ENCODE measurements at regions of chr12 and their contacts with region 1.

Region 1: GRCh38 chr12:108664338-108665258 is 30.9 kb upstream of the SELPLG start:
- DNase-seq: peak; percentile 92
- ATAC-seq: peak; percentile 100
- H3K4me3 Mint-ChIP-seq: peak overlapping the region; percentile 31
- H3K27ac Mint-ChIP-seq: peak overlapping the region; percentile 79
- H3K4me1 Mint-ChIP-seq: peaks cover 19% of the 10 kb centered on the region
- H3K27me3 Mint-ChIP-seq: no peaks in the 10 kb centered on the region
- CTCF ChIP-seq: peak; percentile 96

Region 2: GRCh38 chr12:108457006-108457733 is 207.4 kb before region 1 on chr12:
- CTCF ChIA-PET with region 1: no interaction called
- POLR2A ChIA-PET with region 1: no interaction called
- intact Hi-C with region 1: no loop called
- DNase-seq: peak; percentile 25
- ATAC-seq: peak; percentile 75
- H3K4me3 Mint-ChIP-seq: no peak overlapping the region
- H3K27ac Mint-ChIP-seq: no peak overlapping the region
- H3K4me1 Mint-ChIP-seq: no peaks in the 10 kb centered on the region
- H3K27me3 Mint-ChIP-seq: peaks cover 1% of the 10 kb centered on the region
- CTCF ChIP-seq: peak; percentile 67

Region 3: GRCh38 chr12:108633534-108634248 is 30.9 kb before region 1 on chr12 and contains the start of gene SELPLG:
- CTCF ChIA-PET with region 1: interaction called, 25 read pairs
- POLR2A ChIA-PET with region 1: interaction called, 6 read pairs
- intact Hi-C with region 1: no loop called
- DNase-seq: peak; percentile 94
- ATAC-seq: peak; percentile 52
- H3K4me3 Mint-ChIP-seq: peak within 1 kb of the TSS; percentile 91
- H3K27ac Mint-ChIP-seq: peak within 1 kb of the TSS; percentile 100
- H3K4me1 Mint-ChIP-seq: peaks cover 62% of the 10 kb centered on the region
- H3K27me3 Mint-ChIP-seq: no peaks in the 10 kb centered on the region
- CTCF ChIP-seq: no peak
- total RNA-seq, gene SELPLG: 22.1 to 23.8 TPM

Region 4: GRCh38 chr12:108653082-108653516 is 11.5 kb before region 1 on chr12:
- CTCF ChIA-PET with region 1: interaction called, 26 read pairs
- POLR2A ChIA-PET with region 1: interaction called, 3 read pairs
- intact Hi-C with region 1: no loop called
- DNase-seq: no peak
- ATAC-seq: no peak
- H3K4me3 Mint-ChIP-seq: no peak overlapping the region
- H3K27ac Mint-ChIP-seq: no peak overlapping the region
- H3K4me1 Mint-ChIP-seq: peaks cover 20% of the 10 kb centered on the region
- H3K27me3 Mint-ChIP-seq: no peaks in the 10 kb centered on the region
- CTCF ChIP-seq: no peak

Region 5: GRCh38 chr12:108701779-108702441 is 37.3 kb after region 1 on chr12:
- CTCF ChIA-PET with region 1: interaction called, 110 read pairs
- POLR2A ChIA-PET with region 1: no interaction called
- intact Hi-C with region 1: no loop called
- DNase-seq: peak; percentile 31
- ATAC-seq: peak; percentile 82
- H3K4me3 Mint-ChIP-seq: no peak overlapping the region
- H3K27ac Mint-ChIP-seq: no peak overlapping the region
- H3K4me1 Mint-ChIP-seq: peaks cover 17% of the 10 kb centered on the region
- H3K27me3 Mint-ChIP-seq: no peaks in the 10 kb centered on the region
- CTCF ChIP-seq: no peak

Region 6: DNA sequence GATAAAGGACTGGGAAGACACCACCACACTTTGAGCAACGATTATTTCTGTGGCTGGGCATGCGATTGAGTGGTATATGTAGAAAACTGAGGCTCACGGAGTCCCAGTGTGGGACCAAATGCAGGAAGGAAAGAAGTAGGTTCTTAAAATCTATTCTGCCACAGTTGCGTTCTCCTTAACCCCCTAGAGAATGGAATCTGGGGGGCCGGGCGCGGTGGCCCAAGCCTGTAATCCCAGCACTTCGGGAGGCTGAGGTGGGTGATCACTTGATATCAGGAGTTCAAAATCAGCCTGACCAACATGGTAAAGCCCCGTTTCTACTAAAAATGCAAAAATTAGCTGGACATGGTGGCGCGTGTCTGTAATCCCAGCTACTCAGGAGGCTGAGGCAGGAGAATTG is 96.6 kb after region 1 on chr12:
- CTCF ChIA-PET with region 1: interaction called, 10 read pairs
- POLR2A ChIA-PET with region 1: no interaction called
- intact Hi-C with region 1: no loop called
- DNase-seq: no peak
- ATAC-seq: no peak
- H3K4me3 Mint-ChIP-seq: no peak overlapping the region
- H3K27ac Mint-ChIP-seq: no peak overlapping the region
- H3K4me1 Mint-ChIP-seq: no peaks in the 10 kb centered on the region
- H3K27me3 Mint-ChIP-seq: no peaks in the 10 kb centered on the region
- CTCF ChIP-seq: no peak

Region 7: DNA sequence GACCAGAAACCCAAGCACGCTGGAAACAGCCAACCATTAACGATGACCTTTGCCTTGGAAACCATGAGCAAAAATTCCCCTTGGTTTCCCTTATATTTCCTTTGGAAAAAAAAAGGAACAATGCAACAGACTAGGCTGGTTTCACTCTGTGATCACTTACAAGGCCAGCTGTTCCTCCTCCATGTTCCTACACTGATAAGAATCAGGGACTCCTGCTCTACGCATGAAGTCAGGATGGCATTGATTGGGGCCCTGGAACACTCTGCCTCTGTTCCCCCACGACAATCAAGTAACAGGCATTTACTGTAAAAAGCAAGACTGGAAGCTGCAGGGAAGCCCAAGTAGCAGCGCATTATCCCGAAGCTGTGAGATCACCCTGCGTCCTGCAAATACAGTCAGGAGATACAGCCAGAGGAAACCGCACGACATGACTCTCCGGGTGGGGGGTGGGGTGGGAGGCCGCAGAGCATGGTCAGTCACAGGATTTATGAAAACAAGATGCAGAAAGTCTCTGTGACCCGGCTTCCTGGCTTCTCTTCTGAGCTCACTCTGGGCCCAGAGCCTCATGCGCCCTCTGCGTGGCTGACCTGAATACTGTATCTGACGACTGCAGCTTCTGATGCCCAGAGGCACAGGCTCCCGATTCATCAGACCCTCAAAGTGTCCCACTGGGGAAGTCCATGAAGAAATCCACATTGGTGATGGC is 161.7 kb after region 1 on chr12:
- CTCF ChIA-PET with region 1: interaction called, 12 read pairs
- POLR2A ChIA-PET with region 1: no interaction called
- intact Hi-C with region 1: no loop called
- DNase-seq: peak; percentile 20
- ATAC-seq: peak; percentile 15
- H3K4me3 Mint-ChIP-seq: no peak overlapping the region
- H3K27ac Mint-ChIP-seq: peak overlapping the region; percentile 40
- H3K4me1 Mint-ChIP-seq: peaks cover 42% of the 10 kb centered on the region
- H3K27me3 Mint-ChIP-seq: no peaks in the 10 kb centered on the region
- CTCF ChIP-seq: no peak

Region 8: DNA sequence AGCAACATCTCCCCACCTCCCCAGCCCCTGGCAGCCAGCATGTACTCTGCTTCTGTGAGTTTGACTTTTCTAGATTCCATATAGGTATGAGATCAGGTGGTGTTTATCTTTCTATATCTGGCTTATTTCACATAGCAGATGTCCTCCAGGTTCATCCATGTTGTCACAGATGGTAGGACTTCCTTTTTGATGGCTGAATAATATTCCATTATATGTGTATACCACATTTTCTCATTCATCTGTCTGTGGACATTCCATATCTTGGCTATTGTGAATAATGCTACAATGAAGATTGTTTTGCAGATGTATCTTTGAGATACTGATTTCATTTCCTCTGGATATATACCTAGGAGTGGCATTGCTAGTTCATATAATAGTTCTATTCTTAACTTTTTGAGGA is 410.3 kb after region 1 on chr12:
- CTCF ChIA-PET with region 1: no interaction called
- POLR2A ChIA-PET with region 1: no interaction called
- intact Hi-C with region 1: no loop called
- DNase-seq: no peak
- ATAC-seq: no peak
- H3K4me3 Mint-ChIP-seq: no peak overlapping the region
- H3K27ac Mint-ChIP-seq: no peak overlapping the region
- H3K4me1 Mint-ChIP-seq: no peaks in the 10 kb centered on the region
- H3K27me3 Mint-ChIP-seq: no peaks in the 10 kb centered on the region
- CTCF ChIP-seq: no peak